ENCODE measurements at regions of chr11 and their contacts with region 1.

Region 1: GRCh38 chr11:119018074-119018938 is at the starts of genes RPS25 and TRAPPC4:
- DNase-seq: peak; percentile 96
- H3K4me3 ChIP-seq: peak within 1 kb of the TSS; percentile 61 to 95 (median 78)
- H3K27ac ChIP-seq: peak within 1 kb of the TSS; percentile 64
- H3K4me1 ChIP-seq: peaks cover 16% of the 10 kb centered on the region
- H3K27me3 ChIP-seq: no peaks in the 10 kb centered on the region
- CTCF ChIP-seq: no peak
- total RNA-seq, gene RPS25: 474 to 819 TPM
- total RNA-seq, gene TRAPPC4: 51.1 to 58.2 TPM

Region 2: GRCh38 chr11:118928108-118928870 is 90.0 kb before region 1 on chr11:
- CTCF ChIA-PET with region 1: no interaction called
- dilution Hi-C with region 1: no loop called
- in situ Hi-C with region 1: no loop called
- intact Hi-C with region 1: loop called (anchors 5 kb)
- DNase-seq: peak; percentile 92
- H3K4me3 ChIP-seq: peak overlapping the region; percentile 77 to 85 (median 79)
- H3K27ac ChIP-seq: peak overlapping the region; percentile 84
- H3K4me1 ChIP-seq: peaks cover 44% of the 10 kb centered on the region
- H3K27me3 ChIP-seq: no peaks in the 10 kb centered on the region
- CTCF ChIP-seq: peak; percentile 94 to 95

Region 3: DNA sequence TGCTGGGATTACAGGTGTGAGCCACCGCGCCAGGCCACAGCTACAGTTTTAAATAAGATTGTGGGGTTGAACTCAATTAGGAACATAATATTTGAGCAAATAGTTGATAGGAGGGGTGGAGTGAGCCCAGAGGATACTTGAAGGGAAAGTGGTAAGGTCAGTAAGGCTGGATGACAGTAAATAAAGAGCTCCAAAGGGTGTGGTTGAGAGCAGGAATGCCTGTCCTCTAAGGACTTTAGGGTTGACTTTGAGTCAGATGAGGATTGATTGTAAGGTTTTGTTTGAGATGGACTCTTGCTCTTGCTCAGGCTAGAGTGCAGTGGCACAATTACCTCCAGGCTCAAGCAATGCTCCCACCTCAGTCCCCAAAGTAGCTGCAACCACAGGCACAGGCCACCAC is 44.3 kb before region 1 on chr11:
- CTCF ChIA-PET with region 1: no interaction called
- dilution Hi-C with region 1: no loop called
- in situ Hi-C with region 1: no loop called
- intact Hi-C with region 1: no loop called
- DNase-seq: no peak
- H3K4me3 ChIP-seq: no peak overlapping the region
- H3K27ac ChIP-seq: no peak overlapping the region
- H3K4me1 ChIP-seq: no peaks in the 10 kb centered on the region
- H3K27me3 ChIP-seq: peaks cover 3% of the 10 kb centered on the region
- CTCF ChIP-seq: no peak

Region 4: GRCh38 chr11:118997627-118998387 is 20.5 kb before region 1 on chr11 and contains the start of gene CENATAC:
- CTCF ChIA-PET with region 1: no interaction called
- dilution Hi-C with region 1: no loop called
- in situ Hi-C with region 1: no loop called
- intact Hi-C with region 1: loop called (anchors 1 kb)
- DNase-seq: peak; percentile 87
- H3K4me3 ChIP-seq: peak within 1 kb of the TSS; percentile 68 to 86 (median 80)
- H3K27ac ChIP-seq: peak within 1 kb of the TSS; percentile 81
- H3K4me1 ChIP-seq: peaks cover 30% of the 10 kb centered on the region
- H3K27me3 ChIP-seq: no peaks in the 10 kb centered on the region
- CTCF ChIP-seq: peak in 1 of 2 donors; percentile 17
- total RNA-seq, gene CENATAC: 37.8 to 46.9 TPM

Region 5: GRCh38 chr11:119057000-119057769 is 38.9 kb after region 1 on chr11 and contains the start of gene HYOU1:
- CTCF ChIA-PET with region 1: no interaction called
- dilution Hi-C with region 1: no loop called
- in situ Hi-C with region 1: no loop called
- intact Hi-C with region 1: loop called (anchors 5 kb)
- DNase-seq: peak; percentile 95
- H3K4me3 ChIP-seq: peak within 1 kb of the TSS; percentile 74 to 98 (median 95)
- H3K27ac ChIP-seq: peak within 1 kb of the TSS; percentile 62
- H3K4me1 ChIP-seq: peaks cover 20% of the 10 kb centered on the region
- H3K27me3 ChIP-seq: no peaks in the 10 kb centered on the region
- CTCF ChIP-seq: peak in 1 of 2 donors; percentile 36
- total RNA-seq, gene HYOU1: 160 to 187 TPM

Region 6: DNA sequence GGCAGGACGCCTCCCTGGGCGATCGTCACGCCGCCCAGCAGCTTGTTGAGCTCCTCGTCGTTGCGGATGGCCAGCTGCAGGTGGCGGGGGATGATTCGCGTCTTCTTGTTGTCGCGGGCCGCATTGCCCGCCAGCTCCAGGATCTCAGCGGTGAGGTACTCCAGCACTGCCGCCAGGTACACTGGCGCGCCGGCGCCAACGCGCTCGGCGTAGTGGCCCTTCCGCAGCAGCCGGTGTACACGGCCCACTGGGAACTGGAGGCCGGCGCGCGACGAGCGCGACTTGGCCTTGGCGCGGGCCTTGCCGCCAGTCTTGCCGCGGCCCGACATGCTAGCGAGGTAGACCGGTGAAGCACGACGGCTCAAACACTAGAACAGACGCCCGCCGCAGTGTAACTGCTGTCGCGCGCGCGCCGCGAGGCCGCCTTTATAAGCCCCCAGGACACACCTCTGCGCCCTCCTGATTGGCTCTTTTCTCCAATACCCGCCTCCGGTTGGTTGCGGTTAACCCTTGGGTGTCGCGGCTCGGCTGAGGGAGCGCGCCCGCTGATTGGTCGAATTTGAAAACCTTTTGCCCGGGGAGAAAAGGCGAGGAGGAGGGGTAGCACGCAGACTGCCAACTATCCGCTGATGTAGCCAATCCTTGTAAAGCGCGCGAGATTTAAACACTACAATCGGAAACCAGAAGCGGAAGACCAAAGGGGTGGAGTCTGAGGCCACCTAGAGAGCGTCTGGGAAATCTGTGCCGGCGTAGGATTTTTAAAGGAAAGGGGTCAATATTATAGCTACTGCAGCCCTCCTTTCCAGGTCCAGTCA is 77.0 kb after region 1 on chr11:
- CTCF ChIA-PET with region 1: no interaction called
- dilution Hi-C with region 1: loop called (anchors 5 kb)
- in situ Hi-C with region 1: no loop called
- intact Hi-C with region 1: loop called (anchors 2 kb)
- DNase-seq: peak; percentile 99
- H3K4me3 ChIP-seq: peak overlapping the region; percentile 66 to 87 (median 68)
- H3K27ac ChIP-seq: peak overlapping the region; percentile 64
- H3K4me1 ChIP-seq: peaks cover 24% of the 10 kb centered on the region
- H3K27me3 ChIP-seq: no peaks in the 10 kb centered on the region
- CTCF ChIP-seq: no peak

Region 7: DNA sequence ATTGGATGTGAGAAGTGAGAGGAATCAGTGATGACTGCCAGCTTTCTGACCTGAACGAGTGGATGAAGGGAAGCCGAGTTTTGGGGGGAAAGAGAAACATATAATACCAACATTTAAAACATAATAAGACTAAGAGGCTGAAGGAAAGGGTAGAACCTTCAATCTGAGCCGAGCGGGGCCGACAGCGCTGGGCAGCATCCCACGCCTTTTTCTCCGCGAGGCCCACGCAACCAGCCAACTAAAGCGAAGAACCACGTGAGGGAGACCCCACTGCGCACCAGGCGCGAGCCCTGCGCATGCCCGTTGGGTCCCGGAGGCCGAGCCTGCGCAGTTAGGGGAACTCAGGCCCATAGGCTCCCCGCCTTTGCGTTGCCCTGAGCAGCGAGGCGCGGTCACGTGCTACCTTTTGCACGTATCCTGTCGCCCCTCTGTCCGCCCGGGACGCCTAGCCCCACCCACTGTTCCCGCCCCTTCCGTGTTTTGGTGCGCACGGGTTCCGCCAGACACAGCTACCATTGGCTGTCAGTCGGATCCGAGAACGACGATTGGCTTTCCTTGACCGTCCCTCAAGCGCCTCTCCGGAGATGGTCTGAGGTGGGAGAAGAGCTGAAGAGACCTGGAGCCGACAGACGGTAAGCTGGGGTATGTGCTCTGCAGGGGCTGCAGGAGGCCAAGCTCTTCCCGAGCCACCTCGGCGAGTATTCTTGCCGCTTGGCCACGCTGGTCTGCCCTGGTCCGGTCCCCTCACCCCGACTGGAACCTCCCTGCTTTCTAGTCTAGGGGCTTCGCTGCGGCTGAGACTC is 102.9 kb after region 1 on chr11 and contains the start of gene HINFP:
- CTCF ChIA-PET with region 1: no interaction called
- dilution Hi-C with region 1: loop called (anchors 10 kb)
- in situ Hi-C with region 1: no loop called
- intact Hi-C with region 1: no loop called
- DNase-seq: peak; percentile 99
- H3K4me3 ChIP-seq: peak within 1 kb of the TSS; percentile 77 to 99 (median 94)
- H3K27ac ChIP-seq: peak within 1 kb of the TSS; percentile 79
- H3K4me1 ChIP-seq: peaks cover 12% of the 10 kb centered on the region
- H3K27me3 ChIP-seq: no peaks in the 10 kb centered on the region
- CTCF ChIP-seq: no peak
- total RNA-seq, gene HINFP: 23.7 to 26.8 TPM